Naive thymus-derived CD4-positive, alpha-beta T cell (primary cell): ENCODE measurements at regions of chr9 and their contacts with region 1.

Region 1: GRCh38 chr9:111661150-111661801 is at the start of gene GNG10:
- DNase-seq: peak; percentile 57 to 79 (median 68)
- ATAC-seq: peak; percentile 95
- H3K4me3 ChIP-seq: peak within 1 kb of the TSS; percentile 70
- H3K4me3 Mint-ChIP-seq: peak within 1 kb of the TSS; percentile 87 to 97 (median 93)
- H3K27ac ChIP-seq: peak within 1 kb of the TSS; percentile 71
- H3K27ac Mint-ChIP-seq: peak within 1 kb of the TSS; percentile 82 to 97 (median 92)
- H3K4me1 ChIP-seq: peaks cover 18 to 31% of the 10 kb centered on the region in 2 donors
- H3K4me1 Mint-ChIP-seq: peaks cover 16 to 44% (median 32%) of the 10 kb centered on the region in 7 donors
- H3K27me3 ChIP-seq: no peaks in the 10 kb centered on the region
- H3K27me3 Mint-ChIP-seq: no peaks in the 10 kb centered on the region
- total RNA-seq, gene GNG10: 5.3 to 26.1 (median 12.2) TPM

Region 2: GRCh38 chr9:111691672-111692329 is 30.5 kb after region 1 on chr9:
- CTCF ChIA-PET with region 1: no interaction called
- POLR2A ChIA-PET with region 1: no interaction called
- intact Hi-C with region 1: loop called in 1 of 2 experiments (anchors 1 kb)
- DNase-seq: peak in 5 of 9 donors; percentile 8 to 34 (median 11)
- ATAC-seq: no peak
- H3K4me3 ChIP-seq: no peak overlapping the region
- H3K4me3 Mint-ChIP-seq: no peak overlapping the region
- H3K27ac ChIP-seq: no peak overlapping the region
- H3K27ac Mint-ChIP-seq: no peak overlapping the region
- H3K4me1 ChIP-seq: no peaks in the 10 kb centered on the region
- H3K4me1 Mint-ChIP-seq: peaks cover 0 to 5% (median 0%) of the 10 kb centered on the region in 7 donors
- H3K27me3 ChIP-seq: no peaks in the 10 kb centered on the region
- H3K27me3 Mint-ChIP-seq: no peaks in the 10 kb centered on the region

Region 3: DNA sequence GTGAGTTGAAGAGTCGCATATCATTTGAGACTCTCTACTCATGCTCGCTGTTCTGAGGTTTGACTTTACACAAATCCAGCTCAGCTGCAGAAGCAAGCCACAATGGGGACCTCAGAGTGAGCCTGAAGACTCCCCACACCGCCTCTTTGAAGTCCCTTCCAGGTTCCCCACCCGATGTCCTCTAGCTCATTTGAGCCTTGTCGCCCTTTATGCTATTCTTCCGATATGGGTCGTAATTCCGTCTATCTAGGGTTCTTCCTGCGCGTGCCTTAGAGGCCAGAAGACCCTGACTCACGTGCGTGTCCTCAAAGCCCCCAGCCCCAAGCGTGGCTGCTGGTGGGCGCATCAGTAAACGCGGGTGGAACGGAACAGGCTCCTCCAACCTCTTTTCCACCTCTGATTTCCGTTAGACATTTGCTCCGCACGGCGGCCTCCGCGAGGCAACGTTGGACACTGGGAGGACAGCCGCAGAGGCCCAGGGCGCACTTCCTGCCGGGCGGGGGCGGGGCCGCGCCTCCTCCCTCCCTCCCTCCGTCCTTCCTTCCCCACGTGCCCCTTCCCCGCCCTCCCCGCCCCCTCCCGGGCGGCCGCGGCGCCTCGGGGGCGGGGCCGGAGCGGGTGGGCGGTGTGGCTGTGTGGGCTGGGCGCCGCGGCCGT is 1089.0 kb after region 1 on chr9 and contains the start of gene SNX30:
- CTCF ChIA-PET with region 1: no interaction called
- POLR2A ChIA-PET with region 1: no interaction called
- intact Hi-C with region 1: loop called in 1 of 2 experiments (anchors 1 kb)
- DNase-seq: peak; percentile 66 to 83 (median 75)
- ATAC-seq: peak; percentile 94
- H3K4me3 ChIP-seq: peak within 1 kb of the TSS; percentile 70
- H3K4me3 Mint-ChIP-seq: peak within 1 kb of the TSS; percentile 88 to 94 (median 92)
- H3K27ac ChIP-seq: peak within 1 kb of the TSS; percentile 68
- H3K27ac Mint-ChIP-seq: peak within 1 kb of the TSS; percentile 88 to 98 (median 96)
- H3K4me1 ChIP-seq: peaks cover 46% of the 10 kb centered on the region in 2 donors
- H3K4me1 Mint-ChIP-seq: peaks cover 39 to 66% (median 60%) of the 10 kb centered on the region in 7 donors
- H3K27me3 ChIP-seq: no peaks in the 10 kb centered on the region
- H3K27me3 Mint-ChIP-seq: peaks cover 0 to 4% (median 0%) of the 10 kb centered on the region in 5 donors
- total RNA-seq, gene SNX30: 6.6 to 15.8 (median 9.2) TPM